ENCODE measurements at regions of chr17 and their contacts with region 1.

Region 1: GRCh38 chr17:57833179-57833939 is 16.5 kb downstream of the MRPS23 start:
- DNase-seq: peak; percentile 77
- H3K4me3 ChIP-seq: peak overlapping the region in 1 of 2 experiments; percentile 21; a peak in 2 of 4 replicates
- H3K27ac ChIP-seq: peak overlapping the region in 1 of 2 experiments; percentile 81; a peak in 2 of 4 replicates
- H3K4me1 ChIP-seq: peaks cover 0 to 10% of the 10 kb centered on the region in 2 experiments; a peak in 1 of 4 replicates
- H3K27me3 ChIP-seq: no peaks in the 10 kb centered on the region
- CTCF ChIP-seq: peak; percentile 100
- EP300 ChIP-seq: 0 out of 4 replicates have a peak, but pooled peaks of 1 of the 2 experiments have one; percentile 20
- RAD21 ChIP-seq: peak; percentile 95

Region 2: DNA sequence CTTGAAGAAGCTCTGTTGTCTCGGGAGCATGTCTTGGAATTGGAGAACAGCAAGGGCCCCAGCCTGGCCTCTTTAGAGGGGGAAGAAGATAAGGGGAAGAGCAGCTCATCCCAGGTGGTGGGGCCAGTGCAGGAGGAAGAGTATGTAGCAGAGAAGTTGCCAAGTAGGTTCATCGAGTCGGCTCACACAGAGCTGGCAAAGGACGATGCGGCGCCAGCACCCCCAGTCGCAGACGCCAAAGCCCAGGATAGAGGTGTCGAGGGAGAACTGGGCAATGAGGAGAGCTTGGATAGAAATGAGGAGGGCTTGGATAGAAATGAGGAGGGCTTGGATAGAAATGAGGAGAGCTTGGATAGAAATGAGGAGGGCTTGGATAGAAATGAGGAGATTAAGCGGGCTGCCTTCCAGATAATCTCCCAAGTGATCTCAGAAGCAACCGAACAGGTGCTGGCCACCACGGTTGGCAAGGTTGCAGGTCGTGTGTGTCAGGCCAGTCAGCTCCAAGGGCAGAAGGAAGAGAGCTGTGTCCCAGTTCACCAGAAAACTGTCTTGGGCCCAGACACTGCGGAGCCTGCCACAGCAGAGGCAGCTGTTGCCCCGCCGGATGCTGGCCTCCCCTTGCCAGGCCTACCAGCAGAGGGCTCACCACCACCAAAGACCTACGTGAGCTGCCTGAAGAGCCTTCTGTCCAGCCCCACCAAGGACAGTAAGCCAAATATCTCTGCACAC is 727.1 kb before region 1 on chr17:
- CTCF ChIA-PET with region 1: interaction called, 36 read pairs
- POLR2A ChIA-PET with region 1: no interaction called
- DNase-seq: peak; percentile 52
- H3K4me3 ChIP-seq: no peak overlapping the region
- H3K27ac ChIP-seq: no peak overlapping the region
- H3K4me1 ChIP-seq: peaks cover 0 to 18% of the 10 kb centered on the region in 2 experiments; a peak in 1 of 4 replicates
- H3K27me3 ChIP-seq: no peaks in the 10 kb centered on the region
- CTCF ChIP-seq: no peak; the same call in 1 of the 2 replicates
- EP300 ChIP-seq: no peak
- RAD21 ChIP-seq: 0 out of 2 replicates have a peak, but pooled peaks have one; percentile 23

Region 3: DNA sequence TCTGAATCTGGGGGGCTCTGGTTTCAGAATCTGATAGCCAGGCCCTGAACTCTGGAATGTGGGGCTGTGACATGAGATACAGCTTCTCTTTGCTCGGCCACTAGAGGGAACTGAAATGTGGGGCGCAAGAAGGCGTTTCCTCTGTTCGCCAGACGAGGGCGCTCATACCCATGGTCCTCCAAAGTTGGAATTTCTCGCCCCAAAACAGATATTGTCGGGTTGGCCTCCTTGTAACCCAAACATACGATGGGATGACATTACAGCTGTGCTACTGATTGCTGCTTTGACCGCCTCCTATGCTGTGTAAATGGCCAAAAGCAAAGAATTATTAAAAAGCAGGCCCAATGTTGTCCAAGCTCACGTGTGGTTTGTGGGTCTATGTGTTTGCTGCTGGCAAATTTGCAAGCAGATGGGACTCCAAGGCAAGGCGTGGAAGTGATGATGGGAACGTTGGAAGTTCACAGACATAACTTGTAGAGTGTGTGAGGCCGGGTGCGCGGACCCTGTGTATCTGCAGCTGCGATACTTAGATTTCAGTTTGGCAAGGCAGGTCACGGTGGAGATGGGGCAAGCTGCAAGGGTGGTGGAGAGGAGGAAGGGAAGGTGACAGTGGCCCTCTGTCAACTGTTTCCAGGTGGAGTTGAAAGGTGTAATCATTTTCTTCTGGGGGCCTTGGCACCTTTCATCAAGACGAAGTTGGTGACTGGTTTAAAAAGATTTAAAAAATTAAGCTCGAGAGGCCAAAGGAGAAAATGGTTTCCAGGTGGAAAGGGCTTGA is 590.0 kb before region 1 on chr17:
- CTCF ChIA-PET with region 1: interaction called, 13 read pairs
- POLR2A ChIA-PET with region 1: no interaction called
- DNase-seq: peak; percentile 74
- H3K4me3 ChIP-seq: peak overlapping the region in 1 of 2 experiments; percentile 40; a peak in 1 of 4 replicates
- H3K27ac ChIP-seq: no peak overlapping the region; a peak in 1 of 4 replicates
- H3K4me1 ChIP-seq: peaks cover 0 to 9% of the 10 kb centered on the region in 2 experiments; a peak in 1 of 4 replicates
- H3K27me3 ChIP-seq: no peaks in the 10 kb centered on the region
- CTCF ChIP-seq: peak; percentile 100
- EP300 ChIP-seq: no peak; a peak in 1 of 4 replicates
- RAD21 ChIP-seq: peak; percentile 89

Region 4: DNA sequence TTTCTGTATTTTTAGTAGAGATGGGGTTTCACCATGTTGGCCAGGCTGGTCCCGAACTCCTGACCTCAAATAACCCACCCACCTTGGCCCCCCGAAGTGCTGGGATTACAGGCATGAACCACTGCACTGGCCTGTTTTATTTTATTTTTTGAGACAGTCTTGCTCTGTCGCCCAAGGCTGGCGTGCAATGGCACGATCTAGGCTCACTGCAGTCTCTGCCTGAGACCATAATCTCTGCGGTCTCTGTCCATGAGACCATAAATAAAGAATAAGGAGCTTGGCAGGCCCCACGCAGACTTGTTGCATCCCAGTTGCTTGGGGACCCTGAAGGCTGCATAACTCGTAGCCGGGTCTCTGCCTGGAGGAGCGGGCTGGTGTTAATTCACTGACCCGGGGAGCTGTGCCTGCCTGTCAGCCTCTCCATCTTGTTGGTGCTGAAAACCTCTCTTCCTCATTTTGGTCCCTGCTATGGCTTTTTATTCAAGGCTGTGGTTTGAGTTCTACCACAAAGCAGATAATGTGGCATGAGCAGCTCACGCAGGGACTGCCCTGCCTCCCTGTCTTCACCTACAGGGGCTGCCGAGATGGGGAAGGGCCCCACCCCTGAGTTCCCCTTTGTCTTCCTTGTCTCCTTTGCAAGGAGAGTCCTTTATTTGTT is 495.0 kb before region 1 on chr17:
- CTCF ChIA-PET with region 1: no interaction called
- POLR2A ChIA-PET with region 1: no interaction called
- DNase-seq: no peak
- H3K4me3 ChIP-seq: no peak overlapping the region
- H3K27ac ChIP-seq: peak overlapping the region in 1 of 2 experiments; percentile 26; a peak in 1 of 4 replicates
- H3K4me1 ChIP-seq: peaks cover 0 to 31% of the 10 kb centered on the region in 2 experiments; a peak in 1 of 4 replicates
- H3K27me3 ChIP-seq: no peaks in the 10 kb centered on the region
- CTCF ChIP-seq: no peak
- EP300 ChIP-seq: no peak
- RAD21 ChIP-seq: no peak

Region 5: DNA sequence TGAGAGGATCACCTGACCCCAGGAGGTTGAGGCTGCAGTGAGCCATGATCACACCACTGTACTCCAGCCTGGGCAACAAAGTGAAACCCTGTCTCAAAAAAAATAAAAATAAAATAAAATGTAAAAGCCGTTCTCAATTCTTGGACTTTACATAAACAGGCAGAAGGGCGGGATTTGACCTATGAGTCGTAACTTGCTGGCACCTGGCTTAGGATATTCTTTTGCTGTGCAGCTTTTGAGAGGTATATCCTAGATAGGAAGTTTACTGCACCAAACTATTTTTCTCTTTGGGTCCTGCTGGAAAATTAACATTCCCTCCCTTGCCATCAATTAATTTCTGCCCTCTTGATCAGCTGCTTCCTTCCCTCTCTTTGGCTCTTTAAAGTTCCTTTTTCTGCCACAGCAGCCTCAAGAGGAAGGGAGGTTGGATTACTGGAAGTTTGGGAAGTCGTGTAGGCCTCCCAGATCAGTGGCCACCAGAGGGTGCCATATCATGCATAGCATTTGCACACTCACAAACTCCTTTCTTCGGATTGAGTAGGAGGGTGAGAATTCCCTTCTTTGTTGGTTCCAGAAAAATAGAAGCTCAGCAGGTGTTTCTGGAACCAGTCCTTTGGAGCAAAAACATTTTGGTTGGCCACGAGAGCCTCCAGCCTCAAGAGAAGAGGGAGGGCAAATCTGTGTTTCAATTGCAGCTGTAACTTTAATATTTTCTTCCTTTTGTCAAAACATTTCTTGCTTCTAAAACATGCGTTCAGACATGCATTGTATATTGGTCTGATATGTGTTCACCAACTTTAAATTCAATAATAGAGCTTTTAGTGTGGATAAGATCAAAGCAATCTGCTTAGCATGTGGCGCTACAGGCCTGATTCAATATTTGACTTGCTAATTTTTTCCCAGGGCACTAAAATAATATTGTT is 235.6 kb before region 1 on chr17:
- CTCF ChIA-PET with region 1: interaction called, 32 read pairs
- POLR2A ChIA-PET with region 1: interaction called, 3 read pairs
- DNase-seq: peak; percentile 82
- H3K4me3 ChIP-seq: no peak overlapping the region; a peak in 1 of 4 replicates
- H3K27ac ChIP-seq: peak overlapping the region; percentile 48 to 99
- H3K4me1 ChIP-seq: peaks cover 5 to 87% of the 10 kb centered on the region in 2 experiments; a peak in 3 of 4 replicates
- H3K27me3 ChIP-seq: no peaks in the 10 kb centered on the region
- CTCF ChIP-seq: peak; percentile 99
- EP300 ChIP-seq: peak; percentile 46 to 99; a peak in 2 of 4 replicates
- RAD21 ChIP-seq: peak; percentile 87

Region 6: GRCh38 chr17:57696050-57696449 is 137.3 kb before region 1 on chr17:
- CTCF ChIA-PET with region 1: no interaction called
- POLR2A ChIA-PET with region 1: no interaction called
- DNase-seq: no peak
- H3K4me3 ChIP-seq: no peak overlapping the region
- H3K27ac ChIP-seq: no peak overlapping the region
- H3K4me1 ChIP-seq: peaks cover 0 to 22% of the 10 kb centered on the region in 2 experiments; a peak in 2 of 4 replicates
- H3K27me3 ChIP-seq: no peaks in the 10 kb centered on the region
- CTCF ChIP-seq: no peak
- EP300 ChIP-seq: no peak
- RAD21 ChIP-seq: no peak

Region 7: GRCh38 chr17:57739402-57740392 is 93.7 kb before region 1 on chr17:
- CTCF ChIA-PET with region 1: interaction called, 17 read pairs
- POLR2A ChIA-PET with region 1: no interaction called
- DNase-seq: peak; percentile 76
- H3K4me3 ChIP-seq: no peak overlapping the region
- H3K27ac ChIP-seq: peak overlapping the region in 1 of 2 experiments; percentile 96; a peak in 3 of 4 replicates
- H3K4me1 ChIP-seq: peaks cover 0 to 17% of the 10 kb centered on the region in 2 experiments; a peak in 2 of 4 replicates
- H3K27me3 ChIP-seq: peaks cover 12% of the 10 kb centered on the region
- CTCF ChIP-seq: peak; percentile 45
- EP300 ChIP-seq: peak in 1 of 2 experiments; percentile 81; a peak in 2 of 4 replicates
- RAD21 ChIP-seq: peak; percentile 65

Region 8: DNA sequence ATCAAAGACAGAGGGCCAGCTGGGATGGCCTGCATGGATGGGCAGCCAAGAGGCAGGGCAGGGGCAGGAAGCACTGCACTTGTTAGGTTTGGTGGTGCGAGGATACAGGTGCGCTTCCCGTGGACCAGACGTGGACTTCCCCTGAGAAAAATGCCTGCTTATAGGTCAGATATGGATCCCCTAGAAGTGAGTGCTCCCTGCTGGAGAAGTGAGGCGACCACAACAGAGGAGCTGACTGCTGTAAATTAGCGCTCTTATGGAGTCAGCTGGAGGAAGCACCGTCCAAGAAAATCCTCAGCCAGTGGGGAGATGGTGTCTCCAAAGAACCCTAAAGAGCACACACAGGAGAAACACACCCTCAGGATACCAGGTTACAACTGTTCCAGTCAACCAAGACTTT is 60.6 kb before region 1 on chr17:
- CTCF ChIA-PET with region 1: interaction called, 26 read pairs
- POLR2A ChIA-PET with region 1: no interaction called
- DNase-seq: no peak
- H3K4me3 ChIP-seq: no peak overlapping the region
- H3K27ac ChIP-seq: no peak overlapping the region
- H3K4me1 ChIP-seq: peaks cover 0 to 6% of the 10 kb centered on the region in 2 experiments; a peak in 1 of 4 replicates
- H3K27me3 ChIP-seq: peaks cover 44% of the 10 kb centered on the region
- CTCF ChIP-seq: no peak
- EP300 ChIP-seq: no peak
- RAD21 ChIP-seq: peak; percentile 58

Region 9: DNA sequence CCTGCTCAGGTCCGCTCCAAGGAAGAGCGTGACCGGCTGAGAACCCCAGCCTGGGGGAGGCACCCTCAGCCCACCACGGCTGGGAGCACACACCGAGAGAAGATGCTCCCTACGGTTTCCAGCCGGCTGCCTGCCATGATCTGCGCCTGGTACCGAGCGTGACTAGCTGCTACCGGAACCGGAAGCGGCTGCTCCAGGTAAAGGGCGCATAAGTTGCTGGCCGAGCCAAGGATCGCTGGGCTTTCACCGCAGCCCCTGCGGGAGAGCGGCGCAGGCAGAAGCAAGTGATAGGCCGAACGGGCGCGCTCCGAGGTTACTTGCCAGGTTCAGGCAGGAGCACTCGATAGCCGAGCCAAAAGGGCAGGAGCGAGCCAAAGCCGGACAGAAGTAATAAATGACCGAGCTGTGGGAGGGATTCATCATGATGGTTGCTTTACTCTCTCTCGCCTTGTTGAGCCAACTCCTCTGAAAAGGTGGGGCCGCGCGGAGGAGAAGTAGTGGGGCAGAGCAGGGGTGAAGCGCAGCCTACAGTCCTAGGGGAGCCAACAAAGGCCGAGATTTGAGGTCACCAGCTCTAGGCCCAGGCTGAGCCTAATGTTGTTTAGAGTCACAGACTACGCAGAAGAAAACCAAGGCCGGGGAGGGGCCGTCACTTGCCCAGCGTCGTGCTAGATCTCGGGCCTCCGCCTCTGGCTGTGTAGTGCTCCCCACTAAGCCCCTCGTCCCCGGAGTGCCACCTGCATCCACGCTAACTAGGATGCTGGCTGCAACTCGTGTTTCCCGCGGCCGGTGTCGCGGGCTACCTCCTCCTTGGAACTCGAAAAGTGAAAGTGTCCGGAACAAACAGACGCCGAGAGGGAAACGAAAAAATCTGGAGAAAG is 16.8 kb after region 1 on chr17 and contains the start of gene MRPS23:
- CTCF ChIA-PET with region 1: interaction called, 56 read pairs
- POLR2A ChIA-PET with region 1: no interaction called
- DNase-seq: peak; percentile 98
- H3K4me3 ChIP-seq: peak within 1 kb of the TSS; percentile 92 to 98
- H3K27ac ChIP-seq: peak within 1 kb of the TSS; percentile 82 to 93
- H3K4me1 ChIP-seq: peaks cover 0 to 23% of the 10 kb centered on the region in 2 experiments; a peak in 3 of 4 replicates
- H3K27me3 ChIP-seq: no peaks in the 10 kb centered on the region
- CTCF ChIP-seq: no peak
- EP300 ChIP-seq: peak; percentile 35 to 53; a peak in 2 of 4 replicates
- RAD21 ChIP-seq: 0 out of 2 replicates have a peak, but pooled peaks have one; percentile 2
- polyA plus RNA-seq, gene MRPS23: 105 and 108 TPM in 2 replicates

Region 10: GRCh38 chr17:57892146-57892828 is 58.9 kb after region 1 on chr17:
- CTCF ChIA-PET with region 1: no interaction called
- POLR2A ChIA-PET with region 1: no interaction called
- DNase-seq: peak; percentile 92
- H3K4me3 ChIP-seq: peak overlapping the region in 1 of 2 experiments; percentile 21; a peak in 1 of 4 replicates
- H3K27ac ChIP-seq: peak overlapping the region; percentile 44 to 96
- H3K4me1 ChIP-seq: peaks cover 32 to 60% of the 10 kb centered on the region in 2 experiments
- H3K27me3 ChIP-seq: no peaks in the 10 kb centered on the region
- CTCF ChIP-seq: peak; percentile 100
- EP300 ChIP-seq: no peak
- RAD21 ChIP-seq: peak; percentile 91

Region 11: DNA sequence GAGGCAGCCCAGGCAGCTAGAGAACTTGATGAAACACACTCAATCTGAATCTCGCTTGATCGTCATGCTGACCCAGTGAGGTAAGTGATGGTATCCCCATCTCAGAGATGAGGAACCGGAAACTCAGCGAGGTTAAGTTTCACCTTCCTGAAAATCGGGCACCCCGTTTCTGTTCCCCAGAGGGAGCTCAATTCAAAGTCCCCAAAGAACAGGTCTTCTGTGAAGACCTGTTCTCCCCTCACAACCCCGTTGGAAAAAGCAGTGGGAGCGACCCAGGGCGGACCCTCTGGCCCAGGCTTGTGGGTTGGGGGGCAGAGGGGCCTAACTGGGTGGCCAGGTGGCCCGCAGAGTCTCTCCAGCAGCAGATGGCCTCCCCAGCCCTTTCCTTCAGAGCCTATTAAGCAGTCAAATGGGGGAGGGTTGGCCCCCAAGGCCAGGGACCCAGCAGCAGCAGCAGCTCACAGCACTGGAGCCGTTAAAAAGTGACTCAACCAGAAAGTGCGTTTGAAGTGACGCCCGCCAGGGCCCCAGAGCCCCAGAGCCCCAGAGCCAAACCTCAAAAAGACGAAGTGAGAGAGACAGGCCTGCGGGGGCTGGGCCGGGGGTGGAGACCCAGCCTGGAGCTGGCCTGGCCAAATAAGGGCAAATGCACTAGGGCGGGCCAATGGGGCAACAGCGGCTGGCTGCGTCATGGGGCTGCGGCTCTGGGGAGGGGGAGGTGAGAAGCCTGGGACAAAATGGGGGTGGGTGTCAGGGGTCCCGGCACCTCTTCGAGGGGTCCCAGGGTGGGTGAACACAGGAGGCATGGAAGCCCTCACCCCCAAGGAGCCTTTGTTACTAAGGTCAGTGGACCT is 504.5 kb after region 1 on chr17:
- CTCF ChIA-PET with region 1: no interaction called
- POLR2A ChIA-PET with region 1: no interaction called
- DNase-seq: no peak
- H3K4me3 ChIP-seq: no peak overlapping the region
- H3K27ac ChIP-seq: no peak overlapping the region
- H3K4me1 ChIP-seq: peaks cover 0 to 34% of the 10 kb centered on the region in 2 experiments; a peak in 1 of 4 replicates
- H3K27me3 ChIP-seq: no peaks in the 10 kb centered on the region
- CTCF ChIP-seq: no peak
- EP300 ChIP-seq: no peak
- RAD21 ChIP-seq: no peak